Sigmoid colon (tissue), 7 donors: ENCODE measurements at regions of chr11 and their contacts with region 1.

Region 1: DNA sequence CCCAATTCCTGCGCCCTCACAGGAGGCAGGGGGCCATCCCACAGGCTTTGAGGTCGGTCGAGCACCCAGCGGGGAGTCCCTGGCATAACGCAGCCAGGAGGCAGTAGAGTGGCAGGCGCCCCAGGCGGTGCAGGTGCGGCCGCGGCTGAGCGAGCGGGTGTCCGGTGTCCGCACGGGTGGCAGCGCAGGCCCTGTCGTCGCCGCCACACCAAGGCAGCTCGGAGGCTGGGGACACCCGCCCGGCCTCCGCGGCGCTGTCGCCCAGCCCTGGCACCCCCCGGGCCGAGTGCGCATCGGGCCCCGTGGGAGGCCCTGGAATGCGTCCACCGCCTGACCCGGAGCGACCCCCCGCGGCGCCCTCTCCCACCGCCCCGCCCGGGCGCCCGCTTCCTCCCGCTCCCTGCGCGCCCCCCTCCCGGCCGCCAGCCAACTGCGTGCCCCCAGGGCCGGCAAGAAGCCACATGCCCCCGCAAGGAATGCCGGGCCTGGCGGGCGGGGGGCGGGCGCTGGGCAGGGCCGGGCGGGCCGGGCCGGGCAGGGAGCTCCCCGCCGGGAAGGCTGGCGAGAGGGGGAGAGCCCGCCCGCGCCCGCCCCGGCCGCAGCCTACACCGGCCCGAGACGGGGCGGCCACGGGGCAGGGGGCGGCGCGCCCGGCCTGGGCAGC is 33.9 kb downstream of the PRDM11 start:
- DNase-seq: peak; percentile 82
- H3K4me3 ChIP-seq: peak overlapping the region; percentile 55 to 76 (median 68)
- H3K27ac ChIP-seq: peak overlapping the region; percentile 82 to 93 (median 88)
- H3K4me1 ChIP-seq: peaks cover 0 to 47% (median 39%) of the 10 kb centered on the region in 4 donors
- H3K27me3 ChIP-seq: no peaks in the 10 kb centered on the region
- CTCF ChIP-seq: peak in 3 of 4 experiments; percentile 53 to 56 (median 56)
- EP300 ChIP-seq: no peak
- POLR2A ChIP-seq: no peak

Region 2: DNA sequence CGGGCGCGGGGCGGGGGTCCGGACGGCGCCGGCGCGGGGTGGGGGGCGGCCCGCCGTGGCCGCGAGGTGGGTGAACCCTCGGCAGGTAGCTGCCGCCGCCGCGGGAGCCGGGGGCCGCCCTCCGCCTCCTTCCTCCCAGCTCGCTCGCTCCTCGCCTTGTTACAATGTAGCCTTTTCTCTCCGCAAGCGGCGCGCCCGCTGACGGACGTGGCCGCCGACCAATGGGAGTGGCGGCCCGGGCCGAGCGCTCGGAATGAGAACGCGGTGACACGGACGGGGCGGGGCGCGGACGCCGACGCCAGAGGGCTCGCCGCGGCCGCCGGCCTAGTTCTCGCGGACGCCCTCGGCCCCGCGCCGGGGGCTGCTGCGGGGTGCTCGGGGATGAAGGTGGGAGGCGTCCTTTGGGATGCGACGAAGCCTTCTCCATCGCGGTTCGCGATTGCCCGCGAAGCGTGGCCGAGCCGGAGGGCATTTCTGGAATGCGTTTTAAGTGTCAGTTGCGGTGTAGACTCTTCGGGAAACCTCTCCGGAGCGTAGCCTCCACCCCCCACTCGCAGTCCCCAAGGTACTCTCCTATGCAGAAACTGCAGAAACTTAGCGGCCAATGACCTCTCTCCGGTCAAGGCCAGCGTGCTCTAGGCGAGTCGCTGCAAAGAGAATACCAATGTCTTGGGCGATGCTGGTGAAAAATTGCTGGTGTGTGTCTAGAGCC is 33.1 kb before region 1 on chr11:
- intact Hi-C with region 1: loop called (anchors 1 kb)
- DNase-seq: peak; percentile 98
- H3K4me3 ChIP-seq: peak overlapping the region; percentile 65 to 81 (median 74)
- H3K27ac ChIP-seq: peak overlapping the region; percentile 97 to 100 (median 99)
- H3K4me1 ChIP-seq: peaks cover 0 to 29% (median 27%) of the 10 kb centered on the region in 4 donors
- H3K27me3 ChIP-seq: no peaks in the 10 kb centered on the region
- CTCF ChIP-seq: no peak
- EP300 ChIP-seq: no peak
- POLR2A ChIP-seq: peak; percentile 30 to 38

Region 3: DNA sequence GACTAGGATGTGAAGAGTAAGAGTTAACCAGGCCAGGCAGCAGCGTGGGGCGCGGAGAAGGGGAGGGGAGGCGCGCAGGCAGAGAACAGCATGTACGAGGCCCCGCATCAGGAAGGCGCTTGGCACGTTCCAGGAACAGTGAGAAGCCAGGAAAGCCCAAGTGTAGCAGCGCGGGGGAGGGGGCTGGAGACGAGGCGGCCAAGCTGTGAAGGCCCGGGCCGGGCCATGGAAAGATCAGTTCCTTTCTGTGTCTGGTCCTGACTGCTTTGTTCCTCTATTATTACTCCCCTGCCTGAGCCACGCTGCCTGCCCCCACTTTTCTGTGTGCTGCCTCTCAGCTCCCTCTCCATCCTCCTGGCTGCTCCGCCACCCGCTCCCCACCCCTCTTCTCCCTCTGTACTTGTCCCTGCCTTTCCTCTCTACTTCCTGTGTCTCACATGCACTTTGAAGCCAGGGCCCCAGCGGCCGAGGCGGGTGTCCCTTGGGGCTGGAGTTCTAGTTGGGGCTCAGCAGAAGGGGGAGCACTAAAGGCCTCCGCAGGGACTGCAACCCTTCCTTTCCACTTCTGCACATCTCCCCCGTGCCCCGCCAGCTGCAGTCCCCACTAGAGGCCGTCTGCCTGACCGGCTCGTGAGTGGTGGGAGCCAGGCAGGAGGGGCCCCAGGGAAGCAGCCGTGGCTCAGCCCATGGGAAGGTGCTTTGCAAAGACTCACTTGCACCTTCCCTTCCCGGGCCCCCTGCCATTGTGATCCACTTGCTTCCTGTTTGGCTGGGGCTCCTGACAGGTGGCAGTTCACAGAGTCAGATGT is 29.8 kb after region 1 on chr11:
- intact Hi-C with region 1: loop called (anchors 1 kb)
- DNase-seq: peak; percentile 98
- H3K4me3 ChIP-seq: peak overlapping the region in 3 of 4 donors; percentile 7 to 29 (median 18)
- H3K27ac ChIP-seq: peak overlapping the region; percentile 87 to 95 (median 88)
- H3K4me1 ChIP-seq: peaks cover 0 to 47% (median 42%) of the 10 kb centered on the region in 4 donors
- H3K27me3 ChIP-seq: no peaks in the 10 kb centered on the region
- CTCF ChIP-seq: no peak
- EP300 ChIP-seq: peak in 3 of 4 donors; percentile 76 to 95 (median 84)
- POLR2A ChIP-seq: peak in 1 of 2 donors; percentile 44

Region 4: GRCh38 chr11:45233121-45233803 is 53.0 kb after region 1 on chr11:
- intact Hi-C with region 1: loop called (anchors 2 kb)
- DNase-seq: peak; percentile 86
- H3K4me3 ChIP-seq: no peak overlapping the region
- H3K27ac ChIP-seq: no peak overlapping the region
- H3K4me1 ChIP-seq: peaks cover 0 to 4% (median 0%) of the 10 kb centered on the region in 4 donors
- H3K27me3 ChIP-seq: no peaks in the 10 kb centered on the region
- CTCF ChIP-seq: peak; percentile 52 to 83 (median 60)
- EP300 ChIP-seq: no peak
- POLR2A ChIP-seq: no peak

Region 5: DNA sequence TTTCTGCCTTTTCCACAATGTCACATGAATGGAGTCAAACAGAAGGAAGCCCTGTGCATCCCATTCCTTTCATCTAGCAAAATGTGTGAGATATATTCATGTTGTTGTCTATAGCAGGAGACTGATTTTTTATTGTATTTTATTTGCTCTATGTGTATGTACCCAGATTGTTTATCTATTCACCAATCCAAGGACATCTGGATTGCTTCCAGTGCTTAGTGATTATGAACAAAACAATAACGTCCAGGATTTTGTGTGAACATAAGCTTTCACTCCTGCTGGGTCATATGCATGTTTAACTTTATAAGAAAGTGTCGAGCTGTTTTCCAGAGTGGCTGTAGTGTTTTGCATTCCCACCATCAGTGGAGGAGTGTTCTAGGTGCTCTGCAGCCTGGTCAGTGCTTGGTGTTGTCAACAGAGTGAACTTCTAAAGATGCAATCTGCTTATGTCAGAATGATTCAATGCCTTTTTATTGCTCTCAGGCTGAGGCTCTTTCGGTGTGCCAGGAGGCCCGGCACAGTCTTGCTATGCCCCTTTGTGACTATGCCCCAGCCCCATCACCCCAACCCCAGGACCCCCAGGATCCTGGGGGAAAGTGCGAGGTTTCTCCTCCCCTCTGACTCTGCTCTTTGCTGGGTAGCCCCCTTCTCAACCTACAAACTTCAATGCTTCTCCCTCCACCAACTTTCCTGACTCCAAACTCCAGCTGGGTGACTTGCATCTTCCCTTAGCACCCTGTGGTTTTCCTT is 125.7 kb after region 1 on chr11:
- intact Hi-C with region 1: no loop called
- DNase-seq: no peak
- H3K4me3 ChIP-seq: no peak overlapping the region
- H3K27ac ChIP-seq: no peak overlapping the region
- H3K4me1 ChIP-seq: no peaks in the 10 kb centered on the region
- H3K27me3 ChIP-seq: no peaks in the 10 kb centered on the region
- CTCF ChIP-seq: no peak
- EP300 ChIP-seq: no peak
- POLR2A ChIP-seq: no peak

Region 6: GRCh38 chr11:45339729-45340519 is 159.6 kb after region 1 on chr11:
- intact Hi-C with region 1: loop called (anchors 10 kb)
- DNase-seq: peak; percentile 95
- H3K4me3 ChIP-seq: peak overlapping the region in 1 of 4 donors; percentile 13
- H3K27ac ChIP-seq: no peak overlapping the region
- H3K4me1 ChIP-seq: peaks cover 0 to 10% (median 4%) of the 10 kb centered on the region in 4 donors
- H3K27me3 ChIP-seq: peaks cover 0 to 4% (median 0%) of the 10 kb centered on the region in 3 donors
- CTCF ChIP-seq: peak; percentile 65 to 87 (median 82)
- EP300 ChIP-seq: no peak
- POLR2A ChIP-seq: no peak

Region 7: GRCh38 chr11:45500451-45500850 is 320.1 kb after region 1 on chr11:
- intact Hi-C with region 1: no loop called
- DNase-seq: no peak
- H3K4me3 ChIP-seq: no peak overlapping the region
- H3K27ac ChIP-seq: no peak overlapping the region
- H3K4me1 ChIP-seq: no peaks in the 10 kb centered on the region
- H3K27me3 ChIP-seq: peaks cover 0 to 4% (median 0%) of the 10 kb centered on the region in 3 donors
- CTCF ChIP-seq: no peak
- EP300 ChIP-seq: no peak
- POLR2A ChIP-seq: no peak